AG04449 (cell line): ENCODE measurements at regions of chr2 and their contacts with region 1.

Region 1: DNA sequence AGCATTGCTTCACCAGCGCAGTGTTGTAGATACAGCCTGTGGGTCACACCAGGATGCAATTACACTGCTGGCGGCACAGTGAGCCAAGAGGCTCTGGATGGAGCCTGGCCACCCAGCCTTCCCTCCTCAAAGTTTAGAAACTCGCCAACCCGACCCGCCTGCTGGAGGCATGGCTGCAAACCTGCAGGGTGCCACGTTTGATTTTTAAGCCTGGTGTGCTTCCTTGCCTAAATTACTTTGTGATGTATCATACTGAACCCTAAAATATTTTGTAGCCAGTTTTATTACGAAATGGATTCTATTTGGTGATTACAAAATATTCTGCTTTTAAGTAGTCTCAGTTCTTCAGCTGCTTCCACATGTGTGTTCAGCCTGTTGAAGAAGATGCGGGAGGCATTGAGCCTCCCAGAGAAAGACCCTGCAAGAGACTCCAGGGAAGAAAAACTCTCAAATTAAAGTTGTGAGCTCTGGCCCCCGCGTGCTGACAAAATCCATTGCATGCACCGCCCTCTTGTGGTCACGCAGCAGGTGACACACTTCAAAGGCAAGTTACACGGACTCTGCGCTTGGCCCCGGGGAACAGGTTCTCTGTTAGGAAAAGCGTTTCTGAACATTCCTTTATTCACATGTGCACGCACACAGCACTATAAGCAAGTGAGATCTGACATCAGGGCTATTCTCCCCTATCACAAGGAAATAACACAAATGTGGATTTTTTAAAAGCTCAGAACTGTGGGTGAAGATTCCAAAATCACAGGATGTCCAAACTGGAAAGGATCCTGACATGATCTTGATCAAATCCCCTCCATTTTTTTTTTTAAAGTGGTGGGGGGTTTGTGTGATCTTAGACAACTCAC is 63.0 kb upstream of the TWIST2 start:
- DNase-seq: peak; percentile 16
- H3K4me3 ChIP-seq: no peak overlapping the region
- CTCF ChIP-seq: peak; percentile 88

Region 2: DNA sequence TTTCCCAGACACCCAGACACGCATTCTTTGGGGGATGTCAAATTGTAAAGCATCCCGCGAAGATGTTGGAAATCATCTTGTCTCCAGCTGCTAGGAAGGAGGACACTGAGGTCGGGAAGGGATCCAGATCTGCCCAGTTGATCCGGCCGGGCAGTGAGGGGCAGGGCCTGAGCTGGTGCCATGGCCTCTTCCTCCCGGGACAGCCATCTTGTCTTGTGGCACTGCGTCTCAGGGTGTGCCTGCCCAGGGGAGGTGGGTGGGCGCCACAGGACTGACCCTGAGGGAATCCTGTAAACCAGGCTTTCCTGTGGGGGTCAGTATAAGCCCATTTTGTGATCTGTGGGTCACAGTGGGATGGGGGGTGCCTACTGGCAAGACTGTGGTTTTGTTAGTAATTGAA is 454.5 kb before region 1 on chr2:
- CTCF ChIA-PET with region 1: no interaction called
- POLR2A ChIA-PET with region 1: no interaction called
- DNase-seq: no peak
- H3K4me3 ChIP-seq: no peak overlapping the region
- CTCF ChIP-seq: no peak

Region 3: GRCh38 chr2:238370823-238371372 is 414.0 kb before region 1 on chr2:
- CTCF ChIA-PET with region 1: interaction called, 75 read pairs
- POLR2A ChIA-PET with region 1: no interaction called
- DNase-seq: no peak
- H3K4me3 ChIP-seq: no peak overlapping the region
- CTCF ChIP-seq: peak; percentile 79

Region 4: GRCh38 chr2:238513346-238513745 is 271.6 kb before region 1 on chr2:
- CTCF ChIA-PET with region 1: interaction called, 165 read pairs
- POLR2A ChIA-PET with region 1: interaction called, 4 read pairs
- DNase-seq: no peak
- H3K4me3 ChIP-seq: no peak overlapping the region
- CTCF ChIP-seq: peak; percentile 54

Region 5: DNA sequence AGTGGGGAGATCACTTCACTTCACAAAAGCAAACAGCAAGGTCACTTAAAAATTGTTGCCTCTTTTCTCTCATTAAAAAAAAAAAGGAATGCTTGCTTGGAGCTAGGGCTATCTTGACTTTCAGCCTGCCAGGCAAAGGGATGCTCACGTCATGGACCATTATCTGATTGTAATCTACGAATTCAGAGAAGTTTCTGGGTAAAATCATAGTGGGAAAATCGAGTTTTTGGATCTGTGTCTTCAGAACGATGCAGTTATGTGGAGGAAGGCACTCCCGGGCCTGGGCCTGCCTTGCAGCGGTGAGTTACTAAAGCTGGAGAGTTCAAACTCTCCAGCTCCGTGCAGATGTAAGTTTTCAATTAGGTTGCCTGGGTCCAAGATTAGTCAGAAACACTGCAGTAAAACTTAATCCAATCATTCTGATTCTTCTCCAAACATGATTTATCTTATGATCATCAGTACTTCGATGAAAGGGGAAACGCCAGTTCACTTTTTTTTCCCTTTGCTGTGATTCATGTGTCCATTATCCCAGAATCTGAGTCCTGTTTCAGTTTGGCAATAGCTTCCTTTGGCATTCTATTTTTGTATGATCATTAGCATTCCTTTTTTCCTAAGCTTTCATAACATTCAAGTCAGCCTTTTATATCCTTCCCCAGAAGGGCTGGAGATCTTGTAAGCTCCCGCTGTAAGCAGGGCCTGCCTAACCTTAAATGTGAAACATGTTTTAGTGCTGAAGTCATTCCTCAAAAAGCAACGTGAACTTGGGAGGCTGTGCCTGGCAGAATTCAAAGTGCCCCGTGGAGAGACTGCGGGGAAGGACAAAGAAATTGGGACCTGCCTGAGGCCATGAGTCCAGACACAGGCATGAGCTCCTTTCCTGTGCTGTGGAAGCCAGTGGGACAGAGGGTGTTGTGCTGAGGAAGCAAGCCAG is 56.3 kb before region 1 on chr2:
- CTCF ChIA-PET with region 1: interaction called, 12 read pairs
- POLR2A ChIA-PET with region 1: no interaction called
- DNase-seq: peak; percentile 94
- H3K4me3 ChIP-seq: no peak overlapping the region; the same call in none of the 2 replicates
- CTCF ChIP-seq: no peak

Region 6: DNA sequence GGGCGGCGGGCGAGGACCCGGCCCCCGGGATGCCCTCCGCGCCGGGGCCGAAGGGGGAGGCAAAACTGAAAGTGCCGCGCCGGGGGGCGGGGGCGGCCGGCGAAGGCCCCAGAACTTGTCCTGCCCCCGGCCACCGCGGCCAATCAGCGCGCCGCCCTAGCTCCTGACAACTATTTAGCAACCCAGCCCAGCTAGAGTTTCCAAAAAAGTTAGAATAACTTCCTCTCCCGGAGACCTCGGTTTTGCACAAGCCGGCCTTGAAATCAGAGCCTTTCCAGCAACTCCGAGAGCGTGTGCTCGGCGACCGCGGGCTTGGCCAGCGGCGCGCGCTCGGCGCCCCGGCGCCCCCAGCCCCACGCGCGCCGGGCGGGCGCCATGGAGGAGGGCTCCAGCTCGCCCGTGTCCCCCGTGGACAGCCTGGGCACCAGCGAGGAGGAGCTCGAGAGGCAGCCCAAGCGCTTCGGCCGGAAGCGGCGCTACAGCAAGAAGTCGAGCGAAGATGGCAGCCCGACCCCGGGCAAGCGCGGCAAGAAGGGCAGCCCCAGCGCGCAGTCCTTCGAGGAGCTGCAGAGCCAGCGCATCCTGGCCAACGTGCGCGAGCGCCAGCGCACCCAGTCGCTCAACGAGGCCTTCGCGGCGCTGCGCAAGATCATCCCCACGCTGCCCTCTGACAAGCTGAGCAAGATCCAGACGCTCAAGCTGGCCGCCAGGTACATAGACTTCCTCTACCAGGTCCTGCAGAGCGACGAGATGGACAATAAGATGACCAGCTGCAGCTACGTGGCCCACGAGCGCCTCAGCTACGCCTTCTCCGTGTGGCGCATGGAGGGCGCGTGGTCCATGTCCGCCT is 63.2 kb after region 1 on chr2 and contains the start of gene TWIST2:
- CTCF ChIA-PET with region 1: interaction called, 10 read pairs
- POLR2A ChIA-PET with region 1: no interaction called
- DNase-seq: peak; percentile 85
- H3K4me3 ChIP-seq: peak within 1 kb of the TSS; percentile 89
- CTCF ChIP-seq: peak; percentile 26

Region 7: GRCh38 chr2:238970553-238971081 is 185.7 kb after region 1 on chr2:
- CTCF ChIA-PET with region 1: interaction called, 10 read pairs
- POLR2A ChIA-PET with region 1: no interaction called
- DNase-seq: no peak
- H3K4me3 ChIP-seq: no peak overlapping the region
- CTCF ChIP-seq: peak; percentile 99

Region 8: GRCh38 chr2:240170356-240171282 is 1385.7 kb after region 1 on chr2:
- CTCF ChIA-PET with region 1: no interaction called
- POLR2A ChIA-PET with region 1: no interaction called
- DNase-seq: no peak
- H3K4me3 ChIP-seq: no peak overlapping the region
- CTCF ChIP-seq: no peak